GM12878 (cell line): ENCODE measurements at regions of chr10 and their contacts with region 1.

Region 1: GRCh38 chr10:97991871-97992270 is 38.5 kb downstream of the CRTAC1 start:
- DNase-seq: no peak
- ATAC-seq: no peak
- H3K4me3 ChIP-seq: no peak overlapping the region
- H3K27ac ChIP-seq: no peak overlapping the region
- H3K4me1 ChIP-seq: no peaks in the 10 kb centered on the region
- H3K27me3 ChIP-seq: no peaks in the 10 kb centered on the region; a peak in 1 of 4 replicates
- CTCF ChIP-seq: no peak
- EP300 ChIP-seq: no peak
- POLR2A ChIP-seq: no peak
- RAD21 ChIP-seq: no peak

Region 2: GRCh38 chr10:98006266-98006665 is 14.4 kb after region 1 on chr10:
- CTCF ChIA-PET with region 1: no interaction called
- POLR2A ChIA-PET with region 1: no interaction called
- RAD21 ChIA-PET with region 1: no interaction called
- SMC1A ChIA-PET with region 1: no interaction called
- in situ Hi-C with region 1: no loop called
- intact Hi-C with region 1: no loop called
- DNase-seq: no peak
- ATAC-seq: no peak
- H3K4me3 ChIP-seq: no peak overlapping the region
- H3K27ac ChIP-seq: no peak overlapping the region
- H3K4me1 ChIP-seq: no peaks in the 10 kb centered on the region
- H3K27me3 ChIP-seq: peaks cover 0 to 2% of the 10 kb centered on the region in 2 experiments; a peak in 2 of 4 replicates
- CTCF ChIP-seq: no peak
- EP300 ChIP-seq: no peak
- POLR2A ChIP-seq: no peak
- RAD21 ChIP-seq: no peak

Region 3: DNA sequence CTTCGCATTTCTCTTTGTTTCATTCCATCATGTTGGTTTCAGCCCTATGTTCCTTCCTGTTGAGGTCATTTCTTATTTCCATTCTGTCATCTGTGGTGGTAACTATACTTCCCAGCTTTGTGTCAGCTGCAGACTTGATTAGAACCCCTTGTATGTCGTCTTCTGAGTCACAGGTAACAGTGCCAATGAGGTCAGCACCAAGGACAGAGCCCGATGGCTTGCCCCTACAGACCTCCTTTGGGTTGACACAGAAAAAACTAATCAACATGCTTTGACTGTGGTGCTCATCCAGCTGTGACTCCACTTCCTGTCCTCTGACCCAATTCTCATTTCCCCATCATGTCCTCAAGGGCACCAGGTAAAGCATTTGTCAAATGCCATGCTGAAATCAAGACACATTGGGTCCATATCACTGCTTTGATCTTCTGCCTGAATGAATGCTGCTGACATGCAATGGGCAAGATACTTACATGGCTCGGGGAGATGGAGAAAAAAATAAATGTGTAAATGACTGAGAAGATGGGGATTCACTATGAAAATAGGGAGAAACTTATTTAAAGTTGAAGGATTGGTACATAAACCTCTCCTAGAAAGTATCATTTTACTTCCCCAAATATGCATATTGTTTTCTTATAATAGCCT is 64.1 kb after region 1 on chr10:
- CTCF ChIA-PET with region 1: no interaction called
- POLR2A ChIA-PET with region 1: no interaction called
- RAD21 ChIA-PET with region 1: no interaction called
- SMC1A ChIA-PET with region 1: no interaction called
- in situ Hi-C with region 1: no loop called
- intact Hi-C with region 1: loop called (anchors 10 kb)
- DNase-seq: no peak
- ATAC-seq: peak; percentile 82
- H3K4me3 ChIP-seq: no peak overlapping the region
- H3K27ac ChIP-seq: no peak overlapping the region
- H3K4me1 ChIP-seq: no peaks in the 10 kb centered on the region
- H3K27me3 ChIP-seq: peaks cover 0 to 1% of the 10 kb centered on the region in 2 experiments; a peak in 2 of 4 replicates
- CTCF ChIP-seq: no peak
- EP300 ChIP-seq: no peak
- POLR2A ChIP-seq: no peak
- RAD21 ChIP-seq: no peak